Mammary epithelial cell (primary cell): ENCODE measurements at regions of chr2 and their contacts with region 1.

Region 1: GRCh38 chr2:200713003-200713703 is 98.6 kb upstream of the BZW1 start:
- DNase-seq: peak; percentile 89
- H3K4me3 ChIP-seq: peak overlapping the region; percentile 34
- H3K27ac ChIP-seq: peak overlapping the region; percentile 59
- H3K4me1 ChIP-seq: peaks cover 9% of the 10 kb centered on the region
- H3K27me3 ChIP-seq: no peaks in the 10 kb centered on the region
- CTCF ChIP-seq: peak; percentile 84 to 91

Region 2: GRCh38 chr2:200592406-200593075 is 120.6 kb before region 1 on chr2:
- CTCF ChIA-PET with region 1: no interaction called
- dilution Hi-C with region 1: no loop called
- in situ Hi-C with region 1: no loop called
- intact Hi-C with region 1: no loop called
- DNase-seq: no peak
- H3K4me3 ChIP-seq: no peak overlapping the region
- H3K27ac ChIP-seq: no peak overlapping the region
- H3K4me1 ChIP-seq: peaks cover 6% of the 10 kb centered on the region
- H3K27me3 ChIP-seq: no peaks in the 10 kb centered on the region
- CTCF ChIP-seq: no peak

Region 3: GRCh38 chr2:200735061-200735460 is 21.9 kb after region 1 on chr2:
- CTCF ChIA-PET with region 1: interaction called, 4 read pairs
- dilution Hi-C with region 1: loop called (anchors 5 kb)
- in situ Hi-C with region 1: no loop called
- intact Hi-C with region 1: loop called (anchors 1 kb)
- DNase-seq: no peak
- H3K4me3 ChIP-seq: no peak overlapping the region
- H3K27ac ChIP-seq: no peak overlapping the region
- H3K4me1 ChIP-seq: peaks cover 3% of the 10 kb centered on the region
- H3K27me3 ChIP-seq: no peaks in the 10 kb centered on the region
- CTCF ChIP-seq: no peak

Region 4: GRCh38 chr2:200787348-200788120 is 74.4 kb after region 1 on chr2:
- CTCF ChIA-PET with region 1: no interaction called
- dilution Hi-C with region 1: no loop called
- in situ Hi-C with region 1: no loop called
- intact Hi-C with region 1: loop called (anchors 2 kb)
- DNase-seq: peak; percentile 96
- H3K4me3 ChIP-seq: peak overlapping the region in 1 of 3 experiments; percentile 8
- H3K27ac ChIP-seq: peak overlapping the region; percentile 94
- H3K4me1 ChIP-seq: peaks cover 44% of the 10 kb centered on the region
- H3K27me3 ChIP-seq: no peaks in the 10 kb centered on the region
- CTCF ChIP-seq: no peak

Region 5: GRCh38 chr2:200850512-200851256 is 137.5 kb after region 1 on chr2:
- CTCF ChIA-PET with region 1: no interaction called
- dilution Hi-C with region 1: no loop called
- in situ Hi-C with region 1: no loop called
- intact Hi-C with region 1: no loop called
- DNase-seq: no peak
- H3K4me3 ChIP-seq: no peak overlapping the region
- H3K27ac ChIP-seq: no peak overlapping the region
- H3K4me1 ChIP-seq: no peaks in the 10 kb centered on the region
- H3K27me3 ChIP-seq: no peaks in the 10 kb centered on the region
- CTCF ChIP-seq: no peak

Region 6: DNA sequence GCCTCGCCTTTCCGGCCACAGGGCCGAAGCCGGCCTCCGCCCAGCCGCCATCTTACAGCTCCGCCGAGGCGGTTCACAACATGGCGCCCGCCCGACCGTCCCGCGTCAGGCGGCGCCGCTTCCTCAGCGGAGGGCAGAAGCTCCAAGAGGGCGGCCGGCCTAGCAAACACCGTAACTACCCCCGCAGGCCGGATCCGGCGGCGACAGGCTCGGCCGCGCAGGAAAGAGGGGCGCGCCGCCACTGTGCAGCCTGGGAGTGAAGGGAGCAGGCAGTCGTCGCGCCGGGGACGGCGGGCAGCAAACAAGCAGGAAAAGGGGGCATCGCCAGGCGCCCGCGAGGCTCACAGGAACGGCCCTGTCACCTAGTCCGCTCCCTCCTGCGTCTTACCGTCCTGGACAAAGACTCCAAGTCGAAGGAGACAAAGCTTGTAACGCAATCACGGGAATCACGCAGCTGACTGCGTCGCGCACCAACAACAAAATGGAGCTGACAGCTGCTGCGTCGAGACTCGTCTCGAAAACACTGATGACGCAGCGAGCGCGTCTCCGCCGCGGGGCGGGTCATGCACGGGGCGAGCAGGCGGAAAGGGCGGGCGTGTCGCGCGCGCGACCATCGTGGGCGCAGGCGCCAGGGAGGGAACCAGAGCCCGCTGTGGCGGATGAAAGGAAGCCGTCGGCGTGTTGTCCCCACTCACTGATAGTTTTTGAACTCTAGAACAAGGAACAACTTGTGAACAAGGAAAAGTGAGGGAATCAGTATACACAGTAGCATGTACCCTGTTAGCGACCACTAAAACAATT is 151.2 kb after region 1 on chr2 and contains the start of gene CLK1:
- CTCF ChIA-PET with region 1: no interaction called
- dilution Hi-C with region 1: no loop called
- in situ Hi-C with region 1: no loop called
- intact Hi-C with region 1: loop called (anchors 1 kb)
- DNase-seq: peak; percentile 92
- H3K4me3 ChIP-seq: peak within 1 kb of the TSS; percentile 82 to 100 (median 99)
- H3K27ac ChIP-seq: peak within 1 kb of the TSS; percentile 99
- H3K4me1 ChIP-seq: peaks cover 22% of the 10 kb centered on the region
- H3K27me3 ChIP-seq: no peaks in the 10 kb centered on the region
- CTCF ChIP-seq: no peak
- total RNA-seq, gene CLK1: 55.0 to 55.2 TPM

Region 7: DNA sequence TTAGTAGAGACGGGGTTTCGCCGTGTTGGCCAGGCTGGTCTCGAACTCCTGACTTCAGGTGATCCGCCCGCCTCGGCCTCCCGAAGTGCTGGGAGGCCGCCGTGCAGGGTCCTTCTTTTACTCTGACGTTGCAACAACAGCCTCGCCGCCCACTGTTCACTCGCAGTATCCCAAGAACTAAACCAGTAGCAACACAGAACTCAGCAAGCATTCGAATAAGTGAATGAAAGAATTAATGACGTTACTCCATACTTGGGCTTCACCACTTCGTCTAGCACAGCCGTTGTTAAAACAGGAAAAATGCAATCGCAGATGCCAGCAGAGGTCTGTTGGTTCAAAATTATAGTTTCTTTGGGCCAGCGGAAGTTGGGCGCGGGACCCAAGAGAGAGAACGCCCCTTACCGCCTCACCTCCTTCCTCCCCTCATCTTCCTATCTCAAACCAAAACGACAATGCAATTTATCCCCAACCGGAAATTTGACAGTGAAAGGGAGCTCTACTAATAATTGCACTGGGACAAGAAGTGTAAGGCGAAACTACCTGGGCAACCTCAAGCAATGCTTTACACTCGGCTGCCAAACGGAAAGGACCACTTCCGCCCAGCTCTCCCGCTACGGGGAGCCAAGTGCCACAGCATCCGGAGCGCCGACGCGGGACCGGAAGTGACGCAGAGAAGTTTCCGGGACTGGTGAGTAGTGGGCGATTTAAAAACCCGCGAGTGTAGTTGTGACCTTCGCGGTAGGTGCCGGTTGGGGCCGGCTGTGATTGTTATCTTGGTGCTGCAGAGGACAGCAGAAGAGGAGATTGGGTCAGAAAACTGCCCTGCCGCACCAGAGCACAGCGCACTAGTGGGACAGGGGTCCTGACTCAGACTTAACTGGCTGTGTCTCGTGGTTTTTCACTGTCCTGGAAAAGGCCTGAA is 175.8 kb after region 1 on chr2 and contains the starts of genes NIF3L1 and PPIL3:
- CTCF ChIA-PET with region 1: interaction called, 3 read pairs
- dilution Hi-C with region 1: no loop called
- in situ Hi-C with region 1: no loop called
- intact Hi-C with region 1: loop called (anchors 1 kb)
- DNase-seq: peak; percentile 98
- H3K4me3 ChIP-seq: peak within 1 kb of the TSS; percentile 77 to 97 (median 85)
- H3K27ac ChIP-seq: peak within 1 kb of the TSS; percentile 92
- H3K4me1 ChIP-seq: peaks cover 5% of the 10 kb centered on the region
- H3K27me3 ChIP-seq: no peaks in the 10 kb centered on the region
- CTCF ChIP-seq: no peak
- total RNA-seq, gene NIF3L1: 18.0 to 23.2 TPM
- total RNA-seq, gene PPIL3: 18.5 to 45.1 TPM

Region 8: GRCh38 chr2:201182650-201183364 is 469.7 kb after region 1 on chr2 and contains the start of gene CASP10:
- CTCF ChIA-PET with region 1: no interaction called
- dilution Hi-C with region 1: no loop called
- in situ Hi-C with region 1: loop called in 1 of 2 experiments (anchors 25 kb)
- intact Hi-C with region 1: no loop called
- DNase-seq: peak; percentile 82
- H3K4me3 ChIP-seq: peak within 1 kb of the TSS; percentile 42 to 52 (median 45)
- H3K27ac ChIP-seq: peak within 1 kb of the TSS; percentile 56
- H3K4me1 ChIP-seq: peaks cover 5% of the 10 kb centered on the region
- H3K27me3 ChIP-seq: no peaks in the 10 kb centered on the region
- CTCF ChIP-seq: peak; percentile 54 to 62
- total RNA-seq, gene CASP10: 4.5 to 5.7 TPM